Activated naive CD4-positive, alpha-beta T cell treated with anti-CD3 and anti-CD28 coated beads, Interleukin-2, amount 10 ng/mL, durations not matched to agents 7 days and 5 days (primary cell): ENCODE measurements at regions of chr22 and their contacts with region 1.

Region 1: GRCh38 chr22:20156611-20157429 is 6.0 kb upstream of the CCDC188 start:
- DNase-seq: peak; percentile 91
- H3K4me3 Mint-ChIP-seq: no peak overlapping the region
- H3K27ac Mint-ChIP-seq: no peak overlapping the region
- H3K4me1 Mint-ChIP-seq: peaks cover 5% of the 10 kb centered on the region
- H3K27me3 Mint-ChIP-seq: peaks cover 46% of the 10 kb centered on the region

Region 2: GRCh38 chr22:20238536-20238900 is 81.7 kb after region 1 on chr22:
- CTCF ChIA-PET with region 1: interaction called, 15 read pairs
- DNase-seq: peak; percentile 79
- H3K4me3 Mint-ChIP-seq: no peak overlapping the region
- H3K27ac Mint-ChIP-seq: peak overlapping the region; percentile 91
- H3K4me1 Mint-ChIP-seq: peaks cover 34% of the 10 kb centered on the region
- H3K27me3 Mint-ChIP-seq: no peaks in the 10 kb centered on the region

Region 3: GRCh38 chr22:20283674-20284066 is 126.8 kb after region 1 on chr22:
- CTCF ChIA-PET with region 1: interaction called, 18 read pairs
- DNase-seq: no peak
- H3K4me3 Mint-ChIP-seq: no peak overlapping the region
- H3K27ac Mint-ChIP-seq: no peak overlapping the region
- H3K4me1 Mint-ChIP-seq: no peaks in the 10 kb centered on the region
- H3K27me3 Mint-ChIP-seq: peaks cover 10% of the 10 kb centered on the region